ENCODE measurements at regions of chr3 and their contacts with region 1.

Region 1: DNA sequence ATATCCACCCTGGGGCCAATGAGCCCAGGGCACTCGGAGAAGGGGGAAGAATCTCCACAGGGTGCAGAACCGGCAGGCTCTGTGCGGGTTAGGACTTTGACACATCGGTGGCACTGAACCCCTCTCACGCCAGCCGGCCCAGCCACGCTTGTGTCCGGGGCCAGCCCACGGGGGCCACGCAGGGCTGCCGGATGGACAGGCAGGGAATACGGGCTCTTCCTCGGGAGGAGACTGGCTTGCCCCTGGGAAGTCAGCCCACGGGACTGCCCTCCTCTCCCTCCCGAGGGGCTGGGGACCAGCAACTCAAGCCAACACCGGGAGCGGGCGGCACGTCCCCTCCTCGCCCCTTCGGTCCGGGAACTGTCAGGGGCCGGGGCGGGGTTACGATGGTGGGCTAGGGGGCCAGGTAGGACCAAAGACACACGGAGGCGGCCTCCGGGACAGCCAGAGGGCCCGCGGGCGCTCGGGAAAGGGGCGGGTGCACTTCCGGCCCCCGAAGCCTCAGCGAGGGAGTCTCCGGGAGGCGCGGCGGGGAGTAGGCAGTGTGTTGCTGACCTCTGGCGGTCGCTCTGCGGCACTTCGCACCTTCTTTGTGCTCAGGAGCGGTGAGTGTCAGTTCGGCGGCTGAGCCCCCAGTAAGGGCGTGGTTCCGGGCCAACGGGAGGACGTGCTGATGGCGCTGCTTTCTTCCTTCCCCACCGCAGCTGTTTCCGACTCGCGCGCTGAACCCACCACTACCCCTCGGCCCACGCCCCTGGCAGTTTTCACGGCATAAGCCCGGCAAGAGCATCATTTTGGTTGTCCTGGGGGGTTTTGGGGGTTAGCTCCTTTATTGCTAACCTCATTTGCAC is 5.1 kb upstream of the CYP8B1 start:
- DNase-seq: peak; percentile 93
- H3K4me3 Mint-ChIP-seq: peak overlapping the region; percentile 66
- H3K27ac Mint-ChIP-seq: peak overlapping the region; percentile 55
- H3K4me1 Mint-ChIP-seq: peaks cover 12% of the 10 kb centered on the region
- H3K27me3 Mint-ChIP-seq: peaks cover 18% of the 10 kb centered on the region

Region 2: GRCh38 chr3:42763021-42763420 is 117.8 kb before region 1 on chr3:
- CTCF ChIA-PET with region 1: no interaction called
- DNase-seq: no peak
- H3K4me3 Mint-ChIP-seq: no peak overlapping the region
- H3K27ac Mint-ChIP-seq: no peak overlapping the region
- H3K4me1 Mint-ChIP-seq: no peaks in the 10 kb centered on the region
- H3K27me3 Mint-ChIP-seq: peaks cover 24% of the 10 kb centered on the region

Region 3: DNA sequence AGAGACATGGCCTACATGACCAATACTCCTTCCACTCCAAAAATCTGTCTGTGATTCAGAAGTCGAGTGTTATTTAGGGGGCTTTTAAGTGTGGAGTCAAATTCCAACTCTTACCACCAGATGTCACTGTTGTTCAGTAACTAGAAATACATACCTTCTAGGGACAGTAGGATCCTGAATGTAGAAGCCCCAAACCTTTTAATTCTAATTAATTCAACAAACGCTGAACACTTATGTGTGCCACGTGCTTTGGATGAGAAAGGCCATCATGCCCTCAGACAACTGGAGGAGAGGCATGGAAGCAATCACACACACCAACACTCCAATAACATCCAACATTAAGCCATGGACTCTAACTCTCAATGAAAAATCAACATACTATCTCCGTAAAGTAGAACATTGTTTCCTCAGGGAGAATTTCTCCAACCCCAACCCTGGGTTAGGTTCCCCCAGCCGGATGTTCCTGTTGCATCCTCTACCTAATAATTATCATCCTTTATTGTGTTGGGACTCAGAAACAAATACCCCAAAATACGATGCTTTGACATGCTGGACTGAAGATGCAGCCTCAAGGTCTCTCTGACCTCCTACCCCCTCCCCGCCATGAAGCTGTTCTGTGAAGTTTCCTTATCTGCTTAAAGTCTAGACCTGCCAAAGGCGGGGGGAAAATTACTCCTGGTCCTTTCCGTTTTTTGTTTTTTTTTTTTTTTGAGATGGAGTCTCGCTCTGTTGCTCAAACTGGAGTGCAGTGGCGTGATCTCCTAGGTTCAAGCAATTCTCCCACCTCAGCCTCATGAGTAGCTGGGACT is 99.7 kb before region 1 on chr3:
- CTCF ChIA-PET with region 1: interaction called, 18 read pairs
- DNase-seq: no peak
- H3K4me3 Mint-ChIP-seq: no peak overlapping the region
- H3K27ac Mint-ChIP-seq: no peak overlapping the region
- H3K4me1 Mint-ChIP-seq: peaks cover 2% of the 10 kb centered on the region
- H3K27me3 Mint-ChIP-seq: no peaks in the 10 kb centered on the region

Region 4: GRCh38 chr3:42831321-42831713 is 49.5 kb before region 1 on chr3:
- CTCF ChIA-PET with region 1: interaction called, 19 read pairs
- DNase-seq: peak; percentile 87
- H3K4me3 Mint-ChIP-seq: no peak overlapping the region
- H3K27ac Mint-ChIP-seq: no peak overlapping the region
- H3K4me1 Mint-ChIP-seq: peaks cover 7% of the 10 kb centered on the region
- H3K27me3 Mint-ChIP-seq: peaks cover 11% of the 10 kb centered on the region

Region 5: DNA sequence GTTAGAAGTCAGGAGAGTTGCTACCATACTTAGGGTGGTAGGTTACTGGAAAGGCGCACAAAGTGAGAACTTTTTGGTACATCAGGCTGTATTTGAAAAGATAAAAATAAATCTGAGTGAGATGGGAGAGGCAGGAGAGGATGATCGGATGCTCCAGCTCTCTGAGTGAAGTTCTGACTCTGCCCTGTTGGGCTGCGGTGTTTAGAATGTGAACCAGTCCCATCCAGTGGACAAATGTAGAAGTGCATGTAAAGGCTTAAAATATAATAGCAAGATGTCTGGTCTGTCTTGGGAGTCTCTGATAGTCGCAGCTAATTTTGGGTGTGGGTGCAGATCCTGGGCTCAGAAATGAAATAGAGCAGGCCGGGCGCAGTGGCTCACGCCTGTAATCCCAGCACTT is 41.2 kb before region 1 on chr3:
- CTCF ChIA-PET with region 1: interaction called, 11 read pairs
- DNase-seq: peak; percentile 44
- H3K4me3 Mint-ChIP-seq: no peak overlapping the region
- H3K27ac Mint-ChIP-seq: no peak overlapping the region
- H3K4me1 Mint-ChIP-seq: no peaks in the 10 kb centered on the region
- H3K27me3 Mint-ChIP-seq: peaks cover 8% of the 10 kb centered on the region

Region 6: GRCh38 chr3:42865256-42865655 is 15.6 kb before region 1 on chr3:
- CTCF ChIA-PET with region 1: no interaction called
- DNase-seq: no peak
- H3K4me3 Mint-ChIP-seq: no peak overlapping the region
- H3K27ac Mint-ChIP-seq: no peak overlapping the region
- H3K4me1 Mint-ChIP-seq: no peaks in the 10 kb centered on the region
- H3K27me3 Mint-ChIP-seq: peaks cover 13% of the 10 kb centered on the region